ENCODE measurements at regions of chr15 and their contacts with region 1.

Region 1: GRCh38 chr15:52256366-52256765 is 39.2 kb downstream of the MYO5C start:
- DNase-seq: peak; percentile 21 to 91
- H3K4me3 ChIP-seq: no peak overlapping the region
- H3K27ac ChIP-seq: no peak overlapping the region
- H3K4me1 ChIP-seq: peaks cover 0 to 8% of the 10 kb centered on the region in 2 donors
- H3K27me3 ChIP-seq: no peaks in the 10 kb centered on the region
- CTCF ChIP-seq: peak; percentile 72 to 75 (median 73)

Region 2: GRCh38 chr15:52179278-52180195 is 76.8 kb before region 1 on chr15:
- intact Hi-C with region 1: loop called (anchors 5 kb)
- DNase-seq: peak; percentile 47 to 91
- H3K4me3 ChIP-seq: peak overlapping the region; percentile 95 to 99
- H3K27ac ChIP-seq: peak overlapping the region; percentile 88 to 95
- H3K4me1 ChIP-seq: peaks cover 0 to 3% of the 10 kb centered on the region in 2 donors
- H3K27me3 ChIP-seq: no peaks in the 10 kb centered on the region
- CTCF ChIP-seq: no peak

Region 3: GRCh38 chr15:52337198-52337853 is 81.0 kb after region 1 on chr15:
- intact Hi-C with region 1: loop called (anchors 5 kb)
- DNase-seq: no peak
- H3K4me3 ChIP-seq: no peak overlapping the region
- H3K27ac ChIP-seq: no peak overlapping the region
- H3K4me1 ChIP-seq: no peaks in the 10 kb centered on the region
- H3K27me3 ChIP-seq: no peaks in the 10 kb centered on the region
- CTCF ChIP-seq: no peak

Region 4: GRCh38 chr15:52735231-52736089 is 479.1 kb after region 1 on chr15:
- intact Hi-C with region 1: loop called (anchors 1 kb)
- DNase-seq: peak in 1 of 2 donors; percentile 82
- H3K4me3 ChIP-seq: no peak overlapping the region
- H3K27ac ChIP-seq: no peak overlapping the region
- H3K4me1 ChIP-seq: peaks cover 0 to 7% of the 10 kb centered on the region in 2 donors
- H3K27me3 ChIP-seq: no peaks in the 10 kb centered on the region
- CTCF ChIP-seq: peak; percentile 74 to 88 (median 77)

Measured in ascending aorta (tissue), 2 donors.